MCF 10A (cell line): ENCODE measurements at regions of chr15 and their contacts with region 1.

Region 1: DNA sequence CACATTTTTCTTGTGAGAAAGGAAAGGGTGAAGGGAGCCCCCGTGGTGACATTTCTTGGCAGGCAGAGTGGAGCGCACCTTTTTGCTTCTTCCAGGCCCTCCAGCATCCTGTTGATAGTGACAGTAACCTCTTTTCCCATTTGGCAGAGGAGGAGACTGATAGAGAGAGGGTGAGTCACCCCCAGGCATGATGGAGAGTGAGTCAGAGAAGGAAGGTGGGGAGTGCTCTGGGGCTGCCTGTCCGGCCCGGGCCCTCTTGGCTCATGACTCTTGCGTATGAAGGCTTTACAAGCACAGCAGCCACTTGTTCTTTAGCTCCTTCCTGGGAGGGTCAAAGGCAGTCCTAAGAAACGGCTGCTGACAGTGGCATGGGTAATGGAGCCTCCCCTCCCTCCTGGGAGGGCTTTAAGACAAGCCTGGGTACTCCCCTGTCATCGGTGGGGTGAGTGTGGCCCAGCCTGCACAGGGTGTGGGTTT is 16.0 kb downstream of the ANKRD63 start:
- DNase-seq: peak; percentile 96
- H3K4me3 Mint-ChIP-seq: no peak overlapping the region
- H3K27ac Mint-ChIP-seq: peak overlapping the region; percentile 20
- H3K4me1 Mint-ChIP-seq: peaks cover 7% of the 10 kb centered on the region
- H3K27me3 Mint-ChIP-seq: no peaks in the 10 kb centered on the region
- CTCF ChIP-seq: no peak

Region 2: DNA sequence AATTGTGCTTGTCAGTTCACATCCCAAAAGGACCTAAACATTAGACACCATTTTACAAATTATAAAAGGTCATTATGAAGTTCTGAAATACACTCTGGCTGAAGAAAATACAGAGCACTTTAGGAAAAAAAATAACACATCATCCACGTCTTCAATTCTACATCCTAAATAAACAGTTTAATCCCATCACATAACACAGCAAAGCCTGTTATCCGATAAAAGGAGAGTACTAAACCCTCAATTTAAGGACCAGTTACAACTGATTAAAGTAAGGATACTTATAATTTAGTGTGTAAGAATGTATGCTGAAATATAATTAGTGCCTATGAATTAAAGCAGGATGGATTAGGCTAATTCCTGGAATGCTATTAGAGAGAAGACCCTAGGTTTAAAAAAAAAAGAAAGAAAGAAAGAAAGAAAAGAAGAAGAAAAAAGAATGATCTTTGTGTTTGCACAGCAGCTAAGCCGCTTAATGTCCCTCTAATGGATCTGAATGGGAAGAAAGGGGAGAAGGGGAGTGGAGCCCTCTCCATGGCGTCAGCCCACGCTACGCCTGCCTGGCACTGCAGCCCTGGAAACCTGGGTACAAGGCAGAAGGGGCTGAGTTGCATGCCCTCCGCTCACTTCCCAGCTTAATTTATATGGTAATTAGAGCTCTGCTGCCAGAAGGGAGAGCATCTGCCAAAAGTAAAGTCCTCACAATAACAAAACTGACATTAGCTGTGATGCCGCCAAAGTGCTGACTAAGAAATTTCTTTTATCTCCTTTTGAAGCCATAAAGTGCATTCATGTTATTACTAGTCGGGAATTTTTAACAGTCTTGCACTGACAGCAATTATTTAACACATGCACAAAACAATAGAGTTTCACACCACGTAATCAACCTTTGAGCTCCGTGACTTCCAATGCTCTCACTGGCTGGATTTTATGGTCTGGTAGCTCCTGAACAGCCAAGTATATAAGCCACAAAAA is 574.2 kb before region 1 on chr15:
- CTCF ChIA-PET with region 1: no interaction called
- POLR2A ChIA-PET with region 1: no interaction called
- intact Hi-C with region 1: no loop called
- DNase-seq: no peak
- H3K4me3 Mint-ChIP-seq: no peak overlapping the region
- H3K27ac Mint-ChIP-seq: no peak overlapping the region
- H3K4me1 Mint-ChIP-seq: no peaks in the 10 kb centered on the region
- H3K27me3 Mint-ChIP-seq: no peaks in the 10 kb centered on the region
- CTCF ChIP-seq: no peak

Region 3: DNA sequence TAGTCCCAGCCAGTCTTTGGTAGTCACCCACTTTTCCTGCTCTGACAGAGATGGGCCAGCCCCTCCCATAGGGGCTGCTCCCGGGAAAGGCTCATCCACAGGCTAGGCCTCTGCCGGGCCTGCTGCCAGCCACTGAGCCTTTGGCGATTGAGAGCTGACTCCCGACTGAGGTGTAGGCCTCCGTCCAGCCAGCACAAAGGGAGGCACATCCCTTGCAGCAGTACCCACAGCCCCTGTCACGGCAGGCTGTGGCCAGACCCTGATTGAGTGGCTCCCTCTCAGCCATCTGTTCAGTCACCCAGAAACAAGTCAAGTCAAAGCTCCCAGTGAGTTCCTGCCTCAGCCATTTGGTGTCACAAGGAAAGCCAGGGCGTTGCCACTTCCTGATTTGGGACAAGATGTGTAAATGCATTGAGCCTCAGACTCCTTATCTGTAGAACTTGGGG is 34.2 kb before region 1 on chr15:
- CTCF ChIA-PET with region 1: interaction called, 127 read pairs
- POLR2A ChIA-PET with region 1: interaction called, 12 read pairs
- intact Hi-C with region 1: no loop called
- DNase-seq: peak; percentile 51
- H3K4me3 Mint-ChIP-seq: no peak overlapping the region
- H3K27ac Mint-ChIP-seq: peak overlapping the region; percentile 54
- H3K4me1 Mint-ChIP-seq: peaks cover 13% of the 10 kb centered on the region
- H3K27me3 Mint-ChIP-seq: no peaks in the 10 kb centered on the region
- CTCF ChIP-seq: no peak

Region 4: DNA sequence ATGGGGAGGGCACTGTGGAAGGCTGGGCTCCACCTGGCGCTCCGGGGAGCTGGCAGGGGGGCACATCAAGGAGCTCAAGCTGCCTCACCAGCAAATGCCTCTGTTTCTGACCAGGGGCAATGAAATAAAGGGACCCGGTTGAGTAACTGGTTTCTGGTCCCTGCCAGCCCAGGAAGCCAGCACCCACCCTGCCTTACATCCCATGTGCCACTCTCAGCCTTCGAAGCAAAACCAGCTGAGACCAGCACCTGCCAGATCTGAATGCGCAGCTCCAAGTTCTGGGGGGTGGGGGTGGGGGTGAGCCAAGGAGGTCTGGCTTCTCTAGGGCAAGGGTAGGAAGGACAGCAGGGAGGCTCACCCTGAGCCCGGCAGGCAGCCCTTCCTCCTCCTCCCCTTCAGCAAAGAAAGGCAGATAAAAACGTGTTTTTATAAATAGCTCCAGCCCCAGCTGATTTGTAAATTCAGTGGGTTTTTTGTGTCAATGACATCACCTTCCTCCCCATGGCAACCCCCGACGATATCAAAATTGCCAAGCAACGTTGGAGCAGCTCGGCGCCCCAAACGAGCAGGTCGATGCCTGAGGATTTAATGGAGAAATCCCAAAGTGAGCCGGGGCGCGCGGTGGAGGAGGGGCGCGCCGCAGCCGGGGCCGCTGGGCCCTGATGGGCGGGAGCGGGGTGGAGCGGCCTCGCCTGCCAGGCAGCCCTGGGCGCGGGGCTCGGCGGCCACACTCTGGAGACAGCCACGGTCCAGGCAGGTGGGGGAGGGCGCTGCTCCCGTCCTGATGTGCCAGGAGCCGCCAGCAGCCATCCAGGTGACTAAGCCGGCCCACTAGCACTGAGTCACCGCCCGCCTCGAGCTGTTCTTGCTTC is 28.1 kb before region 1 on chr15 and contains the start of gene PAK6:
- CTCF ChIA-PET with region 1: interaction called, 127 read pairs
- POLR2A ChIA-PET with region 1: interaction called, 42 read pairs
- intact Hi-C with region 1: no loop called
- DNase-seq: peak; percentile 95
- H3K4me3 Mint-ChIP-seq: peak within 1 kb of the TSS; percentile 73
- H3K27ac Mint-ChIP-seq: peak within 1 kb of the TSS; percentile 67
- H3K4me1 Mint-ChIP-seq: peaks cover 50% of the 10 kb centered on the region
- H3K27me3 Mint-ChIP-seq: no peaks in the 10 kb centered on the region
- CTCF ChIP-seq: no peak
- total RNA-seq, gene PAK6: 9.3 and 9.5 TPM in 2 replicates